ENCODE measurements at regions of chr3 and their contacts with region 1.

Region 1: DNA sequence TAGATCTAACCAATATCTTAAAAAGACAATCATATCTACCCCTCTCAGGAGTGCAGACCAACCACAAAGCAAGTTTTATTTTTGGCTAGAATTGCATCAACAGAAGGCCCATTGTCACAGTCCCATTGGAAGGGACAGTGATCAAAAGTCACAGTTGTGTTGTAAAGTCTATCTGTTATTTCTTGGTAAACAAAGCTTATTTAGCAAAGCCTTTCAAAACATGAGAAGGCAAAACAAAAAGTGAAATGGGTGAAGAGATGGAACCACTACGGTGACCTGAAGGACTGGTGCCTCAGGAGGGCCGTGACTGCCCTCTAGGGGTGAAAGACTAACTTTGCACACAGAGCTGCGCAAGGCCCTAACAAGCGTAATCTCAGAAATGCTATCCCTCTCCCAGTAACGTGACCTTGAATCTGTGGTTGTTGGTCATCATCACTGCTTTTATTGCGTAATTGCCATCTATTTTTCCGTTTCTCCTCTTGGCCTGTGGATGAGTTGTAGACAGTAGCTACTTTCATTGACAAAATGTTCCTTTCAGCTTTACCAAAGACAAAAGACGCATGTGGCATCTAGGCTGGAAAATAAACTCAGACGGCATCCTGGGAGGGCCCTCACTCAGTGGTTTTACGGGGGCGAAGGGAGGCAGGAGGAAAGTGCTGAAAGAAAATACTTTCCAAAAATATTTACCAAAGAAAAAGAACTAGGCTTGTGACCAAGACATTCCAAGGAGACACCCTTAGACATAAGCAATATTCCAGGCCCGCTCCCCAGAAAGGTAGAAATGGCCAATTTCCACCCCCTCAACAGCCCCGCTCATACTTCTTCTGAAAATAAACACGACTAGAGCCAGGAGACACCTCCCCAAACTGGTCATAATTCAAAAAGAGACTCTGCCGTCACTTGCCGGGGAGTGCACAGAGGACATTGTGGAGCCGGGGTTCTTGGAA is 79.4 kb downstream of the FRMD4B start:
- DNase-seq: no peak
- ATAC-seq: peak; percentile 98
- H3K4me3 ChIP-seq: no peak overlapping the region
- H3K27ac ChIP-seq: no peak overlapping the region
- H3K4me1 ChIP-seq: no peaks in the 10 kb centered on the region
- H3K27me3 ChIP-seq: no peaks in the 10 kb centered on the region
- CTCF ChIP-seq: peak; percentile 91 to 96 (median 94)
- EP300 ChIP-seq: no peak
- POLR2A ChIP-seq: no peak
- RAD21 ChIP-seq: peak; percentile 98

Region 2: DNA sequence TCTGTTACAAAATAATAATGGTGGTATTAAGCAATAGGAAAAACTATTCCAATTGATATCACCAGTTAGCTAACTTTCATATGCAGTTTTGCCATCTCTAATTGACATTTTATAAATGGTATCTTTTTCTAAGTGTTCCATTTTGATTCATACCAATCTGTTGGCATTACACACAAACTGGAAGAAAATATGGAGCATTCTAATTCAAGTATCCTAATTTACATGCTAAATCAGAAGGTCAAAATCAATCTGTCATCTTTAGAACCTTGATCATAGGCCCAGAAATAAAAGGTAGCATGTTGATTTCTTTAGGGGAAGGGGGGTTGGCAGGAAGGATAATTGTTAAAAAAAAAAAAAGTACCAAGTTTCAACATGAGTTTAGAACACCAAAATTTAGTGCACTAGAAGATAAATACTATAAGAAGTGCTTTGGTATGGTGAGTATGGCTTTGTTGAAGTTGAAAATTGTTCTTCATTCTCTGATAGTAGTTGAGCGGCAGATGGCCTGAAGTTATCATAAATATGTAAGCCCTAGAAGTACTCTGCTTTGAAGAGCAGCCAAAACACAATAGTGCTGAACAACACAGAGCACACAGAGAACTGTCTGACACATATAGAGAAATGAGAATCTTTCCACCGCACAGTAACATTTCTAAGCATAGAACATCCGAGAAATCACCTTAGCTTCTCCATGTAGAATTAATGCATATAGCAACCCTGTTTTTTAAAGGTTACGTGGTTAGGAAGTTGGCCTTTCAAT is 504.2 kb before region 1 on chr3:
- CTCF ChIA-PET with region 1: no interaction called
- POLR2A ChIA-PET with region 1: no interaction called
- RAD21 ChIA-PET with region 1: no interaction called
- SMC1A ChIA-PET with region 1: no interaction called
- in situ Hi-C with region 1: no loop called
- intact Hi-C with region 1: no loop called
- DNase-seq: no peak
- ATAC-seq: no peak
- H3K4me3 ChIP-seq: no peak overlapping the region
- H3K27ac ChIP-seq: no peak overlapping the region
- H3K4me1 ChIP-seq: no peaks in the 10 kb centered on the region
- H3K27me3 ChIP-seq: no peaks in the 10 kb centered on the region
- CTCF ChIP-seq: no peak
- EP300 ChIP-seq: no peak
- POLR2A ChIP-seq: no peak
- RAD21 ChIP-seq: no peak

Region 3: DNA sequence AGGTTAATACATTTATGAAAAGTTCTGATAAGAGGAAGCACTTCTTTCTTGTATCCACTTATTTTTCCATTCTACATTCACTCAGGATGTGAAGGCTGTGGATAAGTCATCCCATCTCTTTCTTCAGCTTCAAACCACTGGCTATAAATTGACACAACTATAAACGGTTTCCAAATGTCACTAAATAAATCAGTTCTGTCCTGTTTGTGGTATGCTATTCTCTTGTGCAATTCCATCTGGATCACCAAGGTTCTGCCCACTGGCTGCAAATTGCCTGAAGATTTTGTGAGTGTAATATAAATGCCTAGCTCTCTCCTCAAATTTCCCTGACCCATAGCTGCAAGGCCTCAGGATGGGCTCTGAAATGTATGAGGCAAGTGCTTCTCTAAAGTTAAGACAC is 177.0 kb before region 1 on chr3:
- CTCF ChIA-PET with region 1: interaction called, 7 read pairs
- POLR2A ChIA-PET with region 1: no interaction called
- RAD21 ChIA-PET with region 1: interaction called, 5 read pairs
- SMC1A ChIA-PET with region 1: interaction called, 14 read pairs
- in situ Hi-C with region 1: no loop called
- intact Hi-C with region 1: no loop called
- DNase-seq: no peak
- ATAC-seq: no peak
- H3K4me3 ChIP-seq: no peak overlapping the region
- H3K27ac ChIP-seq: no peak overlapping the region
- H3K4me1 ChIP-seq: no peaks in the 10 kb centered on the region
- H3K27me3 ChIP-seq: no peaks in the 10 kb centered on the region; a peak in 1 of 4 replicates
- CTCF ChIP-seq: no peak
- EP300 ChIP-seq: no peak
- POLR2A ChIP-seq: no peak
- RAD21 ChIP-seq: no peak

Region 4: DNA sequence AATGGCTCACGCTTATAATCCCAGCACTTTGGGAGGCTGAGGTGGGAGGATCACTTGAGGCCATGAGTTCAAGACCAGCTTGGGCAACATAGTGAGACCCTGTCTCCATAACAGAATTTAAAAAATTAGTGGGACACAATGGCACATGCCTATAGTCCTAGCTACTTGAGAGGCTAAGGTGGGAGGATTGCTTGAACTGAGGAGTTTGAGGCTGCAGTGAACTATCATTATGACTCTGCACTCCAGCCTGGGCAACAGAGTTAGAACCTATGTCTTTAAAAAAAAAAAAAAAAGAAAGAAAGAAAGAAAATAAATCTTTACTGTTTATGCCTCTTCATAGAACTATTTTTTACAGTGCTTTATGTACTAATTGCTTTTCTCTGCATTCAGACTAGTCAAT is 99.5 kb before region 1 on chr3:
- CTCF ChIA-PET with region 1: interaction called, 5 read pairs
- POLR2A ChIA-PET with region 1: interaction called, 3 read pairs
- RAD21 ChIA-PET with region 1: interaction called, 12 read pairs
- SMC1A ChIA-PET with region 1: interaction called, 29 read pairs
- in situ Hi-C with region 1: no loop called
- intact Hi-C with region 1: no loop called
- DNase-seq: no peak
- ATAC-seq: peak; percentile 9; the same call in 1 of the 3 replicates
- H3K4me3 ChIP-seq: no peak overlapping the region
- H3K27ac ChIP-seq: no peak overlapping the region
- H3K4me1 ChIP-seq: peaks cover 15% of the 10 kb centered on the region
- H3K27me3 ChIP-seq: no peaks in the 10 kb centered on the region
- CTCF ChIP-seq: no peak
- EP300 ChIP-seq: no peak
- POLR2A ChIP-seq: no peak
- RAD21 ChIP-seq: no peak

Region 5: DNA sequence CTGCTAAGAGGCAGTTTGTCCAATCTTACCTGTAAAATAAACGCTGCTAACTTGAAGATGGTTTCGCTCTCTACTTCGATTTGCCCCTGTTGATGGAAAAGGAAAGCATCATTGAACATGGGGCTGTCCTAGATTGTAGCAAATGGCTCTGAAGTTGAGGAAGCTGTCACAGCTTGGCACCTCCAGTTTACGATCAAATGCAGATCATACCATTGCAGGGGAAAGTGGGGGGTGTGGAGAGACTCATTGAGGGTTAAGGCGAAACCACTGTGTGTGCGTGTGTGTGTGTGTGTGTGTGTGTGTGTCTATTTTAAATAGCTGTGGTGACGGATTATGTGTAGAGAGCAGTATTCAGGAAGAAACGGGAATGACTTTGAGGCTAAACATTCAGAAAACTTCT is 56.5 kb before region 1 on chr3:
- CTCF ChIA-PET with region 1: interaction called, 37 read pairs
- POLR2A ChIA-PET with region 1: no interaction called
- RAD21 ChIA-PET with region 1: interaction called, 38 read pairs
- SMC1A ChIA-PET with region 1: interaction called, 13 read pairs
- in situ Hi-C with region 1: no loop called
- intact Hi-C with region 1: no loop called
- DNase-seq: no peak
- ATAC-seq: no peak
- H3K4me3 ChIP-seq: no peak overlapping the region
- H3K27ac ChIP-seq: no peak overlapping the region
- H3K4me1 ChIP-seq: no peaks in the 10 kb centered on the region
- H3K27me3 ChIP-seq: no peaks in the 10 kb centered on the region
- CTCF ChIP-seq: no peak
- EP300 ChIP-seq: no peak
- POLR2A ChIP-seq: no peak
- RAD21 ChIP-seq: no peak

Region 6: GRCh38 chr3:69294014-69294775 is 12.3 kb before region 1 on chr3:
- CTCF ChIA-PET with region 1: interaction called, 16 read pairs
- POLR2A ChIA-PET with region 1: interaction called, 7 read pairs
- RAD21 ChIA-PET with region 1: interaction called, 28 read pairs
- SMC1A ChIA-PET with region 1: interaction called, 22 read pairs
- in situ Hi-C with region 1: no loop called
- intact Hi-C with region 1: no loop called
- DNase-seq: no peak
- ATAC-seq: peak; percentile 89
- H3K4me3 ChIP-seq: no peak overlapping the region
- H3K27ac ChIP-seq: no peak overlapping the region
- H3K4me1 ChIP-seq: peaks cover 5% of the 10 kb centered on the region
- H3K27me3 ChIP-seq: no peaks in the 10 kb centered on the region
- CTCF ChIP-seq: no peak
- EP300 ChIP-seq: peak in 1 of 2 experiments; percentile 35; a peak in 1 of 4 replicates
- POLR2A ChIP-seq: no peak
- RAD21 ChIP-seq: no peak

Region 7: GRCh38 chr3:69425261-69425660 is 118.7 kb after region 1 on chr3:
- CTCF ChIA-PET with region 1: interaction called, 144 read pairs
- POLR2A ChIA-PET with region 1: no interaction called
- RAD21 ChIA-PET with region 1: interaction called, 14 read pairs
- SMC1A ChIA-PET with region 1: interaction called, 55 read pairs
- in situ Hi-C with region 1: no loop called
- intact Hi-C with region 1: loop called (anchors 5 kb)
- DNase-seq: no peak
- ATAC-seq: peak; percentile 92
- H3K4me3 ChIP-seq: no peak overlapping the region
- H3K27ac ChIP-seq: no peak overlapping the region
- H3K4me1 ChIP-seq: no peaks in the 10 kb centered on the region
- H3K27me3 ChIP-seq: no peaks in the 10 kb centered on the region
- CTCF ChIP-seq: peak; percentile 67 to 72 (median 68)
- EP300 ChIP-seq: no peak
- POLR2A ChIP-seq: no peak
- RAD21 ChIP-seq: peak; percentile 78

Measured in GM12878 (cell line).